ENCODE measurements at regions of chr21 and their contacts with region 1.

Region 1: DNA sequence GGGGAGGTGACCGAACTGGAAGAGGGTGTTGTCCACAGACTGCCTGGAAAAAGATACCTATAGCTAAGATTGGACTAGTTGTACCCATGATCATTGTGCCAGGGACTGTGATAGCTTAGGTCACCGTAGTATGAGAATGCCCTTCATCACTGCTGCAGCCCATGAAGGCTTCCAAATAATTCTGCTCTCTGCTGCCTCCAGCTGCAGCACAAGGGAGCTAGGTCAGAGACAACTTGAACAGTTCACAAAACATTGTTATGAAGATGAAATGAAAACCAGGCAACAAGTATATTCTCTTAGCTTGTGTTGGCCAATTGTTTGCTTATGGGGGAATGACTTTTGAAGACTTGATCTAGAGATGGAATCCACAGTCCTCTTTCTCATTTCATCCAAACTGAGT is 246.7 kb downstream of the MRPL39 start:
- DNase-seq: no peak
- CTCF ChIP-seq: no peak

Region 2: GRCh38 chr21:25350056-25350455 is 10.5 kb before region 1 on chr21:
- CTCF ChIA-PET with region 1: interaction called, 23 read pairs
- POLR2A ChIA-PET with region 1: no interaction called
- DNase-seq: peak; percentile 20
- CTCF ChIP-seq: peak; percentile 38

Measured in GM10248 (cell line).